H1 (cell line): ENCODE measurements at regions of chr3 and their contacts with region 1.

Region 1: GRCh38 chr3:85821130-85821756 is 862.5 kb downstream of the CADM2 start:
- DNase-seq: peak; percentile 13 to 52
- H3K4me3 ChIP-seq: no peak overlapping the region
- H3K27ac ChIP-seq: no peak overlapping the region
- H3K4me1 ChIP-seq: no peaks in the 10 kb centered on the region
- H3K27me3 ChIP-seq: no peaks in the 10 kb centered on the region
- CTCF ChIP-seq: peak; percentile 27 to 79 (median 60)
- EP300 ChIP-seq: no peak
- POLR2A ChIP-seq: no peak
- RAD21 ChIP-seq: peak; percentile 79 to 82

Region 2: DNA sequence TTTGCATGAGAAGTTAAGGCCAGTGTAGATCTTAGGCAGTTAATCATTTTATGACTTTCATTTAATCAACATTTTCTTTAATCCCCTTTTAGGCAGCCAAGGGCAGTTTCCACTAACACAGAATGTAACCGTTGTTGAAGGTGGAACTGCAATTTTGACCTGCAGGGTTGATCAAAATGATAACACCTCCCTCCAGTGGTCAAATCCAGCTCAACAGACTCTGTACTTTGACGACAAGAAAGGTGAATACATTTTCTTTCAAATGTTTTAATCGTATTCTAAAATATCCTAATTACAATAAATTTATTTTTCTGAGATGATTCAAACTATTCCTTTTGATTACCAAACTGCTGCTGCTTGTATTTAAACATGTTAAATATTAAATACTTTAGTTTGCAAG is 19.3 kb before region 1 on chr3:
- CTCF ChIA-PET with region 1: interaction called, 13 read pairs
- POLR2A ChIA-PET with region 1: no interaction called
- DNase-seq: no peak
- H3K4me3 ChIP-seq: no peak overlapping the region
- H3K27ac ChIP-seq: no peak overlapping the region
- H3K4me1 ChIP-seq: no peaks in the 10 kb centered on the region; a peak in 1 of 7 replicates
- H3K27me3 ChIP-seq: no peaks in the 10 kb centered on the region
- CTCF ChIP-seq: peak in 2 of 3 experiments; percentile 65 to 66; a peak in 3 of 4 replicates
- EP300 ChIP-seq: no peak
- POLR2A ChIP-seq: no peak
- RAD21 ChIP-seq: peak; percentile 83

Region 3: DNA sequence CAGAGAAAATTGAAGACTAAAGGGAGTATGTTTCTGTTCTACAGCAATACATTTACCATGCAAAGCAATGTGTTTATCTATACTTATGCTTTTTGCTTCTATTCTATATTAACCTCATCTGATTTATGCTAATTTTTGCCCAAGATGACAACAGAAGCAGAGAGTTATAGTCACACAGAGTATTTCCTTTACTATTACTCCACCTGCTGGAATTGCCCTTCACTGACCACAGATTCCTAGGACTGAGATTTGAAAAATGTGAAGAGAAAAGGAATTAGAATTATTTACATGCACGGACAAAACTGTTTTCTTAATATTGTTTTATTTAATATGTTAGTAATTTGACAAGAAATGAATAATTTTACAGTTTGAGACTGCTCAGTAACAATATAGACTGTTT is 424.1 kb after region 1 on chr3:
- CTCF ChIA-PET with region 1: interaction called, 41 read pairs
- POLR2A ChIA-PET with region 1: no interaction called
- DNase-seq: no peak
- H3K4me3 ChIP-seq: no peak overlapping the region
- H3K27ac ChIP-seq: no peak overlapping the region
- H3K4me1 ChIP-seq: peaks cover 0 to 3% (median 0%) of the 10 kb centered on the region in 4 experiments; a peak in 1 of 7 replicates
- H3K27me3 ChIP-seq: no peaks in the 10 kb centered on the region; a peak in 1 of 7 replicates
- CTCF ChIP-seq: peak in 2 of 3 experiments; percentile 47 to 51; a peak in 2 of 4 replicates
- EP300 ChIP-seq: no peak
- POLR2A ChIP-seq: no peak
- RAD21 ChIP-seq: peak; percentile 86 to 90